Gastrocnemius medialis (tissue), 4 donors: ENCODE measurements at regions of chr2 and their contacts with region 1.

Region 1: GRCh38 chr2:27461118-27461517 is 18.9 kb downstream of the KRTCAP3 start:
- DNase-seq: peak in 1 of 2 donors; percentile 40
- ATAC-seq: no peak
- H3K4me3 ChIP-seq: no peak overlapping the region
- H3K27ac ChIP-seq: no peak overlapping the region
- H3K4me1 ChIP-seq: no peaks in the 10 kb centered on the region
- H3K27me3 ChIP-seq: no peaks in the 10 kb centered on the region
- CTCF ChIP-seq: no peak
- POLR2A ChIP-seq: no peak

Region 2: DNA sequence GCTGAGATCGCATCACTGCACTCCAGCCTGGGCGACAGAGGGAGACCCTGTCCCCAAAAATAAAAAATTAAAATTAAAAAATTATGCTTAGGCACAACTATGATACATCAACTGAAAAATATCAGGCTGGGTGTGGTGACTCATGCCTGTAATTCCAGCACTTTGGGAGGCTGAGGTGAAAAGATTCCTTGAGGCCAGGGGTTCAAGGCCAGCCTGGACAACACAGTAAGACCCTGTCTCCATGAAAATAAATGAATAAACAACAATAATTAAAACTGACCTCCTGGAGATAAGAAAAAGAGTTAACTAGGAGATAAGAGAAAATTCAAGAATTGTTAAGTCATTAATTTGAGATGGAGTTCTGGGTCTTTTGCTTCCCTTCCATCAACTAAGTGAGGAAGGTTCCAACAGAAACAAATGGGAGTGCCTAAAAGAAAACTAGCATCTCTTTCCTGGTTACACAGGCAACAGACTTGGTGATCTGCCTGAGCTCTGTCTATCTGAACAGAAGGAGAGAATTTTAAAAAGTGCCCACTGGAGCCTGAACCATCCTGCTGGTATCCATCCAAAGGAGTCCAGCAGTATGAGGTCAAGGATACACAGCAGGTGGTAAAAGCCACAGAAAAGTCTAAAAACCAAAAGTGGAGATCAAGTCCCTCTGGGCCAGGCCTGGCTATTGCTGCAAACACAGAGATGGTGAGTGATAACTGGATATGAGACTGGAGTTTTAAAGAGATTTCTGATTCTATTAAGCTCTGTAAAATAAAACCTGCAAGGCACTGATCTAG is 60.6 kb before region 1 on chr2:
- in situ Hi-C with region 1: no loop called
- intact Hi-C with region 1: no loop called
- DNase-seq: no peak
- ATAC-seq: no peak
- H3K4me3 ChIP-seq: no peak overlapping the region
- H3K27ac ChIP-seq: no peak overlapping the region
- H3K4me1 ChIP-seq: no peaks in the 10 kb centered on the region
- H3K27me3 ChIP-seq: no peaks in the 10 kb centered on the region
- CTCF ChIP-seq: no peak
- POLR2A ChIP-seq: no peak

Region 3: GRCh38 chr2:27527182-27527581 is 66.1 kb after region 1 on chr2:
- in situ Hi-C with region 1: no loop called
- intact Hi-C with region 1: loop called (anchors 10 kb)
- DNase-seq: no peak
- ATAC-seq: no peak
- H3K4me3 ChIP-seq: no peak overlapping the region
- H3K27ac ChIP-seq: no peak overlapping the region
- H3K4me1 ChIP-seq: no peaks in the 10 kb centered on the region
- H3K27me3 ChIP-seq: no peaks in the 10 kb centered on the region
- CTCF ChIP-seq: no peak
- POLR2A ChIP-seq: no peak

Region 4: GRCh38 chr2:27628767-27629709 is 167.9 kb after region 1 on chr2 and contains the starts of genes CCDC121 and GPN1:
- in situ Hi-C with region 1: loop called in 1 of 4 experiments (anchors 25 kb)
- intact Hi-C with region 1: no loop called
- DNase-seq: peak; percentile 72 to 80
- ATAC-seq: peak; percentile 93 to 94
- H3K4me3 ChIP-seq: peak within 1 kb of the TSS; percentile 67 to 90 (median 87)
- H3K27ac ChIP-seq: peak within 1 kb of the TSS; percentile 77 to 84 (median 81)
- H3K4me1 ChIP-seq: peaks cover 17 to 27% of the 10 kb centered on the region in 2 donors
- H3K27me3 ChIP-seq: no peaks in the 10 kb centered on the region
- CTCF ChIP-seq: no peak
- POLR2A ChIP-seq: peak; percentile 49 to 50
- total RNA-seq, gene CCDC121: 0.56 to 2.0 (median 1.3) TPM
- total RNA-seq, gene GPN1: 21.0 to 30.0 (median 25.0) TPM